T-cell (primary cell): ENCODE measurements at regions of chr2 and their contacts with region 1.

Region 1: DNA sequence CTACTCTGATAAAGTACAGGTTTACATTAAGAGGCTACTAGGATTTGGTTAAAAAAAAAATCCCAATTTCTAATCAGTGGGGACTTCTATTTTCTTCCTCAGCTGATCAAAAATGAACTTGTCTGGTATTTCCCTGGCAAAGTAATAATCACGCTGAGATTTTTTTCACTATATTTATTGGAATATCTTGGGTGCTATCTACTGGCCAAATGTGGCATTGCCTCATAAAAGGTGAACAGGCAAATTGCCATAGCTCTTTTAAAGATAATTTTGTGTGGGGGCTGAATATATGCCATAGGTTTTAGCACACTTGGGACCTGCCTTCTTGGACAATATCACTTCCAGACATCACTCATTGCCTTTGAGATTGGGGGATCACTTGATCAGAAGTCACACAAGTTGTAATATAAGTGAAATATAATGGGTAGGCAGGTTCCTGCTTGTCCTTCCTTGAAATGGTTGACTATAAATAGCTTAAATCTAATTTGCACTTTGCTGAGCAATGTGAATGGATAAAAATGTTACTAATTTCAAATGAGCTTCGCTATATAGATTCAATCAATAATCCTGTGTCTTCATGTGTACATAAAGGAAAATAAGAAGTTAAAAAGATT is 7.0 kb upstream of the NXPH2 start:
- DNase-seq: peak in 1 of 35 experiments; percentile 22
- ATAC-seq: no peak
- H3K4me3 ChIP-seq: no peak overlapping the region
- H3K4me3 Mint-ChIP-seq: no peak overlapping the region
- H3K27ac ChIP-seq: no peak overlapping the region
- H3K27ac Mint-ChIP-seq: no peak overlapping the region
- H3K4me1 ChIP-seq: no peaks in the 10 kb centered on the region
- H3K4me1 Mint-ChIP-seq: no peaks in the 10 kb centered on the region
- H3K27me3 ChIP-seq: peaks cover 0 to 7% of the 10 kb centered on the region in 2 experiments
- H3K27me3 Mint-ChIP-seq: peaks cover 5 to 14% of the 10 kb centered on the region in 2 donors

Region 2: DNA sequence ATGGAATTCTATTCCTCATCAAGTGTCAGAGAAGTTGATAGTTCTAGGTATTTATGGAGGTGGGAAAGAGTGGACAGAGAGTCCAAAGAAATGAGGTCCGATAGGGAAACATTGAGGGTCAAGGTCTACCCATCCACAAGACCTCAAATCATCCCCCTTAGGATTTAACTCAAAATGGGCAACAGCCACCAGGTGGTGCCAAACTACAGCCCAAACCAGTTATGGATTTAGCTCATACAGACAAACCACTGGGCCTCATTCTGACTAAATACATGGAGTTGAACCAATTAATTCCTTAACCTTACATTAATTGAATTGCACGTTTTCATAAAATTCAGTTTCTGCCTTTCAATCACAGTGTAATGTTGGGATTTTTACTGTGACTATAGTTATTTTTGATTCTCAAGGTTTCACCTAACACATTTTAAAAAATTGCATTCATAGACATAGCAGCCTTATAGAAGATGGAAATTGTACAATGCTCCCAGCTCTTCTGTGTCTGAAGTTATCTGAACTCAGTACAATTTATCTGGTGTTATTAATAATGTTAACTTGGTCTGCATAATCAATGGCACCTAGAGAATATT is 921.1 kb before region 1 on chr2:
- CTCF ChIA-PET with region 1: interaction called in 1 of 2 experiments, 13 read pairs
- POLR2A ChIA-PET with region 1: no interaction called
- DNase-seq: peak in 28 of 35 experiments; percentile 2 to 47 (median 22)
- ATAC-seq: no peak
- H3K4me3 ChIP-seq: no peak overlapping the region
- H3K4me3 Mint-ChIP-seq: no peak overlapping the region
- H3K27ac ChIP-seq: no peak overlapping the region
- H3K27ac Mint-ChIP-seq: no peak overlapping the region
- H3K4me1 ChIP-seq: no peaks in the 10 kb centered on the region
- H3K4me1 Mint-ChIP-seq: no peaks in the 10 kb centered on the region
- H3K27me3 ChIP-seq: no peaks in the 10 kb centered on the region
- H3K27me3 Mint-ChIP-seq: peaks cover 2 to 5% of the 10 kb centered on the region in 2 donors

Region 3: GRCh38 chr2:138516030-138516704 is 271.0 kb before region 1 on chr2:
- CTCF ChIA-PET with region 1: no interaction called
- POLR2A ChIA-PET with region 1: no interaction called
- DNase-seq: peak in 1 of 35 experiments; percentile 24
- ATAC-seq: peak in 3 of 4 experiments; percentile 58 to 75 (median 67)
- H3K4me3 ChIP-seq: no peak overlapping the region
- H3K4me3 Mint-ChIP-seq: peak overlapping the region in 1 of 3 donors; percentile 1
- H3K27ac ChIP-seq: no peak overlapping the region
- H3K27ac Mint-ChIP-seq: peak overlapping the region in 1 of 2 donors; percentile 12
- H3K4me1 ChIP-seq: peaks cover 0 to 17% of the 10 kb centered on the region in 2 experiments
- H3K4me1 Mint-ChIP-seq: peaks cover 49 to 59% (median 53%) of the 10 kb centered on the region in 3 donors
- H3K27me3 ChIP-seq: no peaks in the 10 kb centered on the region
- H3K27me3 Mint-ChIP-seq: peaks cover 0 to 5% of the 10 kb centered on the region in 2 donors

Region 4: DNA sequence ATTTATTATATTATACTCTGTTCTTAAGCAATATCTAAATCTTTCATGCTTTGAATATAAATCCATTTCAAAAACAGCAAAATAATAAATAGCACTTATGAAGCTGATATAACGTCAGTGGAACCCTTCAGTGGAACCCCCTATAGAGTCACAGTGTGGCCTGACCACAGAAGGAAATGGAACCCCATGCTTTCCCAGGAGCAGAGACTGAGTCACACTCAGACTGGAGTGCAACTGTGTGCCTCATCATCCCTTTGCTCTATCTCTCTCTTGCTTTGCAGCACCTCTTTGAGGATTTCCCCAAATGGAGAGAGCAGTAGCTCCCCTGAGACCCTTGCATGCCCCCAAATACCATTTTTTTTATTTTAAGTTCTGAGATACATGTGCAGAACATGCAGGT is 20.1 kb before region 1 on chr2:
- CTCF ChIA-PET with region 1: no interaction called
- POLR2A ChIA-PET with region 1: no interaction called
- DNase-seq: no peak
- ATAC-seq: no peak
- H3K4me3 ChIP-seq: no peak overlapping the region
- H3K4me3 Mint-ChIP-seq: no peak overlapping the region
- H3K27ac ChIP-seq: no peak overlapping the region
- H3K27ac Mint-ChIP-seq: no peak overlapping the region
- H3K4me1 ChIP-seq: no peaks in the 10 kb centered on the region
- H3K4me1 Mint-ChIP-seq: no peaks in the 10 kb centered on the region
- H3K27me3 ChIP-seq: peaks cover 0 to 4% of the 10 kb centered on the region in 2 experiments
- H3K27me3 Mint-ChIP-seq: peaks cover 6% of the 10 kb centered on the region in 2 donors